ENCODE measurements at regions of chr16 and their contacts with region 1.

Region 1: DNA sequence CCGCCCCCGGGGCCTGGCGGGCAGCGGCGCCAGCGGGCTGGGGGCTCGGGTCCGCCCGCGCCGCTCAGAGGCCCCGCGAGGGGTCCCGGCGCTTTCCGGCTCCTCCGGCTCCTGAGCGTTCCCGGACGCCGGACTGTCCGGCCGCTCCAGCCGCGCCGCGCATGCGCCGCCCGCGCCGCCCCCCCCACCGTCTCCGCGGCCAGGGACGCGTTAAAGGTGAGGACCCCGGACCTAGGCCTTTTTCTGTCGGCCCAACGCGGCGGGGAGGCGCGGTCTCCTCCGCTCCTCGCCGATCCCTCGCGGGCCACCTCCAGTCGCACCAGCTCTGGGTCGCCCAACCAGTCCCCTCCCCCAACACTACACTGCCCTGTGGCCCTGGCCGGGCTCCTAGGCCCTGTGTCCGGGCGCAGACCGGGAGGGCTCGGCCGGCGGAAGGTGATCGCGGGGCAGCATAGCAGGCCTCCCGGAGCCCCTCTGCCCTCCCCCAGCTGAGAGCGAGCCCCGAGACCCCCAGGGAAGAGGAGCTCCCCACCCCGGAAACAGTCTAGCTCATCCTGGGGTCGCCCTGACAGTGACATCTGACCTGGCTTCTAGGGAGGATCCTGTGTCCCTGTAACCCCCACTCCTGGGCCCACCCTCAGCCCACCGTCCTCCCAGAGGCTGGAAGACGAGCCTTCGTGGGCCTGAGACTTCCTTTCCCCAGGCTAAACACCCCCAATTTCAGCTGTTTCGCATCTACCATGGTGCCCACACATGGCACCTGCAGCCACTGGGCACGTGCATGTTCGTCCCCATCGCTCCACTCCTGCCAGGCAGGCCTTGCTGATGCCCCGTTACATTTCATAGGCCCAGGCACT is 14.6 kb upstream of the BCAR1 start:
- DNase-seq: no peak
- ATAC-seq: peak; percentile 47

Region 2: GRCh38 chr16:75251280-75252048 is 14.6 kb before region 1 on chr16 and contains the start of gene BCAR1:
- intact Hi-C with region 1: loop called (anchors 2 kb)
- DNase-seq: peak; percentile 94
- ATAC-seq: peak; percentile 89
- total RNA-seq, gene BCAR1: 76.7 TPM

Measured in Right ventricle myocardium inferior (tissue), 1 donor.